AG04450 (cell line): ENCODE measurements at regions of chr2 and their contacts with region 1.

Region 1: GRCh38 chr2:240513549-240514287 is 44.1 kb downstream of the ANKMY1 start:
- DNase-seq: peak; percentile 68
- H3K4me3 ChIP-seq: no peak overlapping the region
- H3K27ac ChIP-seq: no peak overlapping the region
- H3K27me3 ChIP-seq: no peaks in the 10 kb centered on the region
- CTCF ChIP-seq: peak; percentile 97

Region 2: GRCh38 chr2:240499309-240500301 is 14.1 kb before region 1 on chr2:
- CTCF ChIA-PET with region 1: interaction called, 19 read pairs
- POLR2A ChIA-PET with region 1: no interaction called
- DNase-seq: no peak
- H3K4me3 ChIP-seq: no peak overlapping the region
- H3K27ac ChIP-seq: no peak overlapping the region
- H3K27me3 ChIP-seq: no peaks in the 10 kb centered on the region
- CTCF ChIP-seq: no peak

Region 3: GRCh38 chr2:240560480-240561326 is 47.0 kb after region 1 on chr2:
- CTCF ChIA-PET with region 1: interaction called, 17 read pairs
- POLR2A ChIA-PET with region 1: no interaction called
- DNase-seq: peak; percentile 93
- H3K4me3 ChIP-seq: peak overlapping the region; percentile 70
- H3K27ac ChIP-seq: peak overlapping the region; percentile 88
- H3K27me3 ChIP-seq: no peaks in the 10 kb centered on the region
- CTCF ChIP-seq: peak; percentile 40

Region 4: DNA sequence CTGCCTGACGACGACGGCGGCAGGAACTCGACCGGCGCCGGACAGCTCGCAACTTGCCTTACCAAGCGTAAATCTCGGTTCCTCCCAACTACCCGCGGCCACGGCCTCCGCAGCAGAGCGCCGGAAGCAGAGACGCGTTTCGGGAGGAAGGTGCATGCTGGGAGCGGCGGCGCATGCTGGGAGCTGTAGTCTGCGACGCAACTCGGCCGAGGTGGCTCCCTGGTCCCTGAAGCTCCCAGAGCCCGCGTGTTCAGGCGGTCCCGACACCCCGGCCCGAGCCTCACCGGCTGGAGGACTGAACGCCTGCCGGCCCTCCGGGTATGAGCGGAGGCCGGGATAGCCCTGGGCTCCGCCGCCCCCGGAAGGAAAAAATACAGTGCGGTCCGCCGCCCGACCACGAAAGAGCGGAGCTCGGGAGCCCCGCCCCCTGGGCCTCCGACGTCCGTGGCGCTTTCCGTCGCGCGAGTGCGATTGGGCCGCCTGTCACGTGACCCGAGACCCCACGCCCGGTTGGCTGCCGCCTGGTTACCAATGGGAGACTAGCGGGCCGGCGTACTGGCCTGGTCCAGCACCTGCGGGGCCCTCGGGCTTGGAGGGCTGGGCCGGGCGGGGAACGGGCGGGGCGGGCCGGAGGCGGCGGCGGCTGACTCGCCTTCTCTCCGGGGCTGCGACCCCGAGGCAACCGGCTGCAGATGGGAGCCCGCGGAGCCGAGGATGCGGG is 72.6 kb after region 1 on chr2 and contains the start of gene CAPN10:
- CTCF ChIA-PET with region 1: interaction called, 22 read pairs
- POLR2A ChIA-PET with region 1: no interaction called
- DNase-seq: peak; percentile 78
- H3K4me3 ChIP-seq: peak within 1 kb of the TSS; percentile 99
- H3K27ac ChIP-seq: peak within 1 kb of the TSS; percentile 78
- H3K27me3 ChIP-seq: no peaks in the 10 kb centered on the region
- CTCF ChIP-seq: no peak
- polyA plus RNA-seq, gene CAPN10: 5.6 and 7.5 TPM in 2 replicates

Region 5: DNA sequence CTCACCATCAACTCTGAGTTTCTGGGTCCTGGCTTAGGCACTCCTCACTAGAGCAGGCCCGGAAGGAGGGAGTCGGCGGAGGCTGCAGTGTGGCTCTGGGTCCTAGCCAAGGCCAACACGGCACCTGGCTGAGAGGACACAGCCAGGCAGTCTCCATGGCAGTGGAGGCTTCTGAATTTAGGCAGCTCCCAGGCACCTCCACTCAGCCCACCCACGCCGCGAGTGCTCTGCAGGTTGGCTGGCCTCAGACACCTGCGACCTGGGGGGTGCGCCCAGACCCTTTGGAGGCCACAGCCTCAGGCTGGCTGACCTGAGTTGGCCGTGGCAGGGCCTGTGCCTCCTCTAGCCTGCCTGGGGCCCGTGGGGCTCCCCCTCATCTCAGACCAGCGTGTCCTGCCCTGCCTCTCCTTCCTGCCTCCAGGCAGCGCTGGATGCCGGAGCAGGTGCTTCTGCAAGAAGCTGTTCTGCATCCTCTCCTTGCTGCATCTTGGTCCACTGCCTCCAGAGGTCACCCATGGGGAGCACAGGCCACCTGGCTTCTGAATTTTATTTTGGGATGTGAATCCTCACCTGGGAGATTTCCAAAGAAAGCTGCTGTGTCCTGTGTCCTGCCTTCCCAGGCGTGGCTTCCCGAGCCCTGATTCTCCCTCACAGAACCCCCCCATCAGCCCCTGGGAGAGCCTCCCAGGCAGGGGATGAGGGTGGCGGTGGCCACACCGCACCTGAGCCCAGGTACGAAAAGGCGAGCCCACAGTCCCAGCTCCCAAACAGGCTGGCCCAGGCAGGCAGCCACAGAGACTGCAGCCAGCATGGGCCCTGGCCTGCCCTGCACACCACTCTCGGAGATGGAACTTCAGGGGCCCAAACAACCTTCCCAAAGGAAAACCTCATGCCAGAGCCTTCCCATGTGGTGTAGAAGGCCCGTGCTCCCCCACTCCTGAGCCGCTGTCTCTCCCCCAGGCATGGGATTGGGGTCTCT is 201.3 kb after region 1 on chr2:
- CTCF ChIA-PET with region 1: no interaction called
- POLR2A ChIA-PET with region 1: no interaction called
- DNase-seq: no peak
- H3K4me3 ChIP-seq: no peak overlapping the region
- H3K27ac ChIP-seq: no peak overlapping the region
- H3K27me3 ChIP-seq: peaks cover 5% of the 10 kb centered on the region
- CTCF ChIP-seq: no peak

Region 6: GRCh38 chr2:240840435-240841080 is 326.8 kb after region 1 on chr2:
- CTCF ChIA-PET with region 1: interaction called, 66 read pairs
- POLR2A ChIA-PET with region 1: interaction called, 3 read pairs
- DNase-seq: peak; percentile 10
- H3K4me3 ChIP-seq: no peak overlapping the region
- H3K27ac ChIP-seq: no peak overlapping the region
- H3K27me3 ChIP-seq: peaks cover 22% of the 10 kb centered on the region
- CTCF ChIP-seq: peak; percentile 78